ENCODE measurements at regions of chr2 and their contacts with region 1.

Region 1: DNA sequence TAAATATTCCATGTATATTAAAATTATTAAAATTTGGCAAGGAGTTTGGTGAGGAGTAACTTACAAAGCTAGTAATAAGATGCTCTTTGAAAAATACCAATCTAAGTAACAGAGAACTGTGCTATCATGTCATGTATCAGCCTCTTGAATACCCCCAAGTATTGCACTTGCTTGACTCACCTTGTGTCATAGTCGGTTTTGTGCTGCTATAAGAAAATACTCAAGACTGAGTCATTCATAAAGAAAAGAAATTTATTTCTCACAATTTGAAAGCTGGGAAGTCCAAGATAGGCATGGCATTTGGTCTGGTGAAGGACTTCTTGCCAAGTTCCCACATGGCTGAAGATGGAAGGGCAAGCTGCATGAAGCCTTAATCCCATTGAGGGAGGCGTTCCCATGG is 179.2 kb downstream of the MEMO1 start:
- DNase-seq: no peak
- H3K4me3 Mint-ChIP-seq: no peak overlapping the region
- H3K27ac Mint-ChIP-seq: no peak overlapping the region
- H3K4me1 Mint-ChIP-seq: no peaks in the 10 kb centered on the region
- H3K27me3 Mint-ChIP-seq: no peaks in the 10 kb centered on the region

Region 2: DNA sequence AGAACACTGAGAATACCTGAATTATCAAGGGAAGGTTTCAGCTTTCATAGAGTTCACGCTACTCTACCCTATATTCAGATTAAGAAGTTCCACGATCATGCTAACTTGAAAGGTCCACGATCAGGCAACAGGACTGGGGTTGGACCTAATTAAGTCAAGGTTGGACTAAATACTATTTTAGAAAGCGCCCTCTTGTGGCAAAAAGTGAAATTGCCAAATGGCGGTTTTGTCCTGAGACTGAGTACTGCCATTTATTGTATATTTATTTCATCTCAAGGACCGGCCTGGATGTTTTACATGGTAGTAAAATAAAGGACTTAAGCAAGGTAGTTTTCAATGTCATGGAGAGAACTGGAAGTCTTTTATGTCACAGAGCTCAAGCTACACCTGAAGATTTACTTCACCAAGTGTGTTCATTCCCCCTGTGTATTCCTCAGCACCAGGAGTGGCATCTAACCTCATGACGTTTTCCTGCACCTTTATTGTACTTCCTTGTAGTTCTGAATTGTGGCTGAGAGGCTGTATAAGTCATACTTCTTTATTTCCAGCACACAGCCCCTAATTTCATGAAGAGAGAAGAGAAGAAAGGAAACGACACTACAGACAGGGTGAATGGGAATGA is 307.6 kb before region 1 on chr2:
- CTCF ChIA-PET with region 1: no interaction called
- intact Hi-C with region 1: loop called (anchors 10 kb)
- DNase-seq: peak; percentile 74
- H3K4me3 Mint-ChIP-seq: no peak overlapping the region
- H3K27ac Mint-ChIP-seq: no peak overlapping the region
- H3K4me1 Mint-ChIP-seq: no peaks in the 10 kb centered on the region
- H3K27me3 Mint-ChIP-seq: peaks cover 10% of the 10 kb centered on the region

Region 3: GRCh38 chr2:31694444-31694843 is 137.1 kb before region 1 on chr2:
- CTCF ChIA-PET with region 1: no interaction called
- intact Hi-C with region 1: loop called (anchors 5 kb)
- DNase-seq: no peak
- H3K4me3 Mint-ChIP-seq: no peak overlapping the region
- H3K27ac Mint-ChIP-seq: no peak overlapping the region
- H3K4me1 Mint-ChIP-seq: no peaks in the 10 kb centered on the region
- H3K27me3 Mint-ChIP-seq: no peaks in the 10 kb centered on the region

Measured in activated naive CD4-positive, alpha-beta T cell treated with anti-CD3 and anti-CD28 coated beads for 36 hours (primary cell).